ENCODE measurements at regions of chr9 and their contacts with region 1.

Region 1: DNA sequence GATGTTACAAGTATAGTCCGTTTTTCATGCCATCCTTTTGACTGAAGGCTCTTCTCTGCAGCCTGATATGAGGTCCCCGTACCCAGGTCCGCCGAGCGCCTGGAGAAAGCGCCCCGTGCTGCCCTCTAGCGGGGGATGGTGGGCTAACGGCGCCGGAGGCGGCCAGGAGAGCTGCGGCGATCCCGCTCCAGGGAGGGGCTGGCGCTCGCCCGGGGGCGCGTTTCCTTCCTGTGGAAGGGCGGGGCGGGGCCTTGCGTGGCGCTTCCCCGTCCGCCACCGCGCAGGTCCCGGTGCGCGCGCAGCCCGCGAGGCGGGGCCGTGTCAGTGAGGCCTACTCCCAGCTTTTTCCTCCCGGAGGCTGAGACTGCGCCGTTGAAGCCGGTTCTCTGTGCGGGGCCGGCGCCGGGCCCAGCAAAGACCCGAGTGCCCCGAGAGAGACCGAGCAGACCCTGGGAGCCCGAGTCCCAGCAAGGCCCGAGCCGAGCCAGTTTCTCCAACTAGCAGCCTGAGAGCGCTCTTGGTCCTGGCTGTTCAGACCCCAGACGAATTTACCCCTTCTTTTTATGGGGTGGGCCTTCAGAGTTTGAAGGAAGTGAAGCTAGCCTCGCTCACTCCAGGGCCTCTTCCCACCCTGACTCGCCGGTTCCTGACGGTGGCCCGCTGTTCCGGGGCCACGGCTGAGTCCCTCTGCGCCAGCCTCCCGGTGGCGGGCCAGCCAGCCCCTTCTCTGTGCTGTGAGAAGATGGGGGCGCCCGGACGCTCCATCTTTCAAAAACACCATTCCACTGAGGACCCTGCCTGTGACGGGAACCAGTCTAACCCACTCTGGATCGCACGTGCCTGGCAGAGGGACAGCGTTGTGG is 9.7 kb upstream of the PHF2 start:
- DNase-seq: peak; percentile 69
- ATAC-seq: peak; percentile 97
- H3K4me3 ChIP-seq: peak overlapping the region; percentile 73
- H3K27ac ChIP-seq: peak overlapping the region; percentile 88
- H3K4me1 ChIP-seq: peaks cover 7% of the 10 kb centered on the region
- H3K27me3 ChIP-seq: no peaks in the 10 kb centered on the region
- CTCF ChIP-seq: peak; percentile 93 to 96 (median 94); a peak in 5 of 6 replicates
- EP300 ChIP-seq: no peak
- POLR2A ChIP-seq: peak; percentile 92
- RAD21 ChIP-seq: peak; percentile 71

Region 2: DNA sequence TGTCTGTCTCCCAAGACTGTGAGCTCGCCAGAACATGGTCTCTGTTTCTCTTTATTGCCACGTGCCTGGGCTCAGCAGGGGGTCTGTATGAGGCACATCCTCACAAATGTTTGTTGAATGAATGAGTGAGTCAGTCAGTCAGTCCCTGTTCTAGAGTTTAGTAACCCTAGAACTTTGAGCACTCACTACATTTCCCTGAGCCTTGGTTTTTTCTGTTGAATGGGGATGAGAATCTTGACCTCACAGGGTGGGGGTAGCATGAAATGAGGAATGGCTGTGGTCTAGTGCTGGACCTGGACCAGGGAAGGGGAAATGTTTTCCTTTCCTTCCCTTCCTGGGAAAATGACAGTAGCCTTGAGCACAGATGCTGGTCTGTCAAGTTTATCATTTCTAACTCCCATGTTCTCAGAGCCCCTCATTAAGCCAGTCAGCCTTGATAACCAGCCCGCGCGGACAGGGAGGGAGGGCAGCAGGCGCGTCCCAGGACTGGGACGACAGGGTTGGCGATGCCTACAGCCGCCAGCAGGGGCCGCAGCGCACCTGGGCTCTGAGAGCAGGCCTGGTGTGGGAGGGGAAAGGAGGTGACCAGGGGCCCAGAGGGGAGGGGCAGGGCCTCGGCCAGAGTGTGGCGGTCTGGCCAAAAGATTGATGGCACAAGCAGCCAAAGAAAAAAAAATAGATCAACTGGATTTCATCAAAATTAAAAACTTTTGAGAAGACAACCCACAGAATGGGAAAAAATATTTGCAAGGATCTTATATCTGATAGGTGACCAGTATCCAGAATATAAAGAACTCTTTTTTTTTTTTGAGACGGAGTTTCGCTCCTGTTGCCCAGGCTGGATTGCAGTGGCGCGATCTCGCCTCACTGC is 406.8 kb before region 1 on chr9:
- CTCF ChIA-PET with region 1: interaction called, 4 read pairs
- POLR2A ChIA-PET with region 1: no interaction called
- RAD21 ChIA-PET with region 1: interaction called, 5 read pairs
- SMC1A ChIA-PET with region 1: no interaction called
- in situ Hi-C with region 1: no loop called
- intact Hi-C with region 1: loop called (anchors 1 kb)
- DNase-seq: no peak
- ATAC-seq: peak; percentile 98
- H3K4me3 ChIP-seq: no peak overlapping the region
- H3K27ac ChIP-seq: no peak overlapping the region
- H3K4me1 ChIP-seq: peaks cover 5% of the 10 kb centered on the region
- H3K27me3 ChIP-seq: no peaks in the 10 kb centered on the region; a peak in 1 of 4 replicates
- CTCF ChIP-seq: peak; percentile 98 to 100 (median 98); a peak in 5 of 6 replicates
- EP300 ChIP-seq: no peak
- POLR2A ChIP-seq: no peak
- RAD21 ChIP-seq: peak; percentile 98

Region 3: DNA sequence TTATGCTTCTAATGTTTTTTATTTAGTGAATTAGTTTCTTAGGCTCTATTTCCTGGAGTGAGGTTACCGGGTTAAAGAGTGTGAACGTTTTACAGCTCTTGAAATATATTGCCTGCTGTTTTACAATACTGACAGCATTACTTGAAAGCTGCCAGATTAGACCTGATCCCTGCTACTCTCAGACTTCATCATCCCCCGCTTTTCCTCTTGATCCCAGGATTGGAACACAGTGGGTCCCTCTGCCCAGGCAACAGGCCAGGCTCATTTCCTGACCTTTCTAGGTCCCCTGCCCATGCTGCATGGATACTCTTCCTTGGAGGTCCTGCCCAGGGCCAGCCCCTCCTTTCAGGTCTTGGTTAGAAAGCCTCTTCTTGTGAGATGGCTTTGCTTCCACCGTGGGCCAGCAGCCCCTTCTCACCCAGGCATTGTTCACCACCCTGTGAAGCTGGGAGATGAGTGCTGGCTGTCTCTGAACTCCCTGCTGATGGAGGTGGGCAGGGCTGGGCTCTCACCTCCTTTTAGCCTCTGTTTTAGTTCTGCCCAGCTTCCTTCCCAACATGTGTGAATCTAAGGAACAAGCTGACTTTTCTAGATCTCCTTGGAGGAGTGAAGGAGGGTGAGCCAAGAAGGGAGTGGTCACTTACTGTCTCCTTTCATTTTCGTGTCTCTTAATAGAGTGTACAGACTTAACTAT is 97.7 kb before region 1 on chr9:
- CTCF ChIA-PET with region 1: interaction called, 11 read pairs
- POLR2A ChIA-PET with region 1: no interaction called
- RAD21 ChIA-PET with region 1: interaction called, 5 read pairs
- SMC1A ChIA-PET with region 1: interaction called, 4 read pairs
- in situ Hi-C with region 1: no loop called
- intact Hi-C with region 1: no loop called
- DNase-seq: no peak
- ATAC-seq: peak; percentile 40
- H3K4me3 ChIP-seq: 0 out of 2 replicates have a peak overlapping the region, but pooled peaks have one; percentile 19
- H3K27ac ChIP-seq: peak overlapping the region; percentile 14; the same call in 1 of the 2 replicates
- H3K4me1 ChIP-seq: peaks cover 25% of the 10 kb centered on the region
- H3K27me3 ChIP-seq: no peaks in the 10 kb centered on the region
- CTCF ChIP-seq: no peak
- EP300 ChIP-seq: no peak
- POLR2A ChIP-seq: no peak
- RAD21 ChIP-seq: no peak

Region 4: GRCh38 chr9:93549611-93550010 is 17.0 kb before region 1 on chr9:
- CTCF ChIA-PET with region 1: interaction called, 26 read pairs
- POLR2A ChIA-PET with region 1: interaction called, 3 read pairs
- RAD21 ChIA-PET with region 1: interaction called, 5 read pairs
- SMC1A ChIA-PET with region 1: interaction called, 7 read pairs
- in situ Hi-C with region 1: no loop called
- intact Hi-C with region 1: no loop called
- DNase-seq: no peak
- ATAC-seq: no peak
- H3K4me3 ChIP-seq: no peak overlapping the region
- H3K27ac ChIP-seq: no peak overlapping the region
- H3K4me1 ChIP-seq: no peaks in the 10 kb centered on the region
- H3K27me3 ChIP-seq: no peaks in the 10 kb centered on the region
- CTCF ChIP-seq: no peak
- EP300 ChIP-seq: no peak
- POLR2A ChIP-seq: no peak
- RAD21 ChIP-seq: no peak

Region 5: GRCh38 chr9:93577076-93577974 is 10.7 kb after region 1 on chr9:
- CTCF ChIA-PET with region 1: interaction called, 24 read pairs
- POLR2A ChIA-PET with region 1: interaction called, 7 read pairs
- RAD21 ChIA-PET with region 1: interaction called, 3 read pairs
- SMC1A ChIA-PET with region 1: interaction called, 6 read pairs
- in situ Hi-C with region 1: no loop called
- intact Hi-C with region 1: no loop called
- DNase-seq: no peak
- ATAC-seq: peak; percentile 17
- H3K4me3 ChIP-seq: peak overlapping the region; percentile 68
- H3K27ac ChIP-seq: no peak overlapping the region
- H3K4me1 ChIP-seq: peaks cover 11% of the 10 kb centered on the region
- H3K27me3 ChIP-seq: no peaks in the 10 kb centered on the region
- CTCF ChIP-seq: no peak
- EP300 ChIP-seq: no peak
- POLR2A ChIP-seq: no peak
- RAD21 ChIP-seq: no peak

Region 6: DNA sequence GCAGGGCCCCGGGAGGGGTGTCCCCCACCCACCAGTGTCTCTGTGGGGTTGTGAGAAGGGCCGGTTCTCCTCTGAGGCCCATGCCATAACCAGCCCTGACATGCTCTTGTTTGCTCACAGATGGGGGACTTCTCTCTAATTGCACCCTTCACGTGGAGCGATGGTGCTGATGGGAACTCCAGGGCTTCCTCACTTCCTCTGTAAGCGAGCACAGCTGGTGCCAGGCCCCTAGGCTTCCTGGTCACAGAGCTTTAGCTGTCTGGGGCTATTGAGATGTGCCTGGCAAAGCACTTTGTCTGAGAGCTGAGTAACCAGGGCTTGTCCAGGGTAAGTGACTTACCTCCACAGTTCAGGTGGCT is 46.1 kb after region 1 on chr9:
- CTCF ChIA-PET with region 1: no interaction called
- POLR2A ChIA-PET with region 1: no interaction called
- RAD21 ChIA-PET with region 1: no interaction called
- SMC1A ChIA-PET with region 1: no interaction called
- in situ Hi-C with region 1: no loop called
- intact Hi-C with region 1: no loop called
- DNase-seq: peak; percentile 15
- ATAC-seq: peak; percentile 83
- H3K4me3 ChIP-seq: no peak overlapping the region
- H3K27ac ChIP-seq: peak overlapping the region; percentile 1; the same call in 1 of the 2 replicates
- H3K4me1 ChIP-seq: peaks cover 3% of the 10 kb centered on the region; the same call in 1 of the 2 replicates
- H3K27me3 ChIP-seq: no peaks in the 10 kb centered on the region
- CTCF ChIP-seq: no peak
- EP300 ChIP-seq: no peak
- POLR2A ChIP-seq: no peak
- RAD21 ChIP-seq: no peak

Region 7: GRCh38 chr9:93660352-93661051 is 93.9 kb after region 1 on chr9:
- CTCF ChIA-PET with region 1: no interaction called
- POLR2A ChIA-PET with region 1: no interaction called
- RAD21 ChIA-PET with region 1: no interaction called
- SMC1A ChIA-PET with region 1: no interaction called
- in situ Hi-C with region 1: no loop called
- intact Hi-C with region 1: no loop called
- DNase-seq: no peak
- ATAC-seq: no peak
- H3K4me3 ChIP-seq: no peak overlapping the region
- H3K27ac ChIP-seq: no peak overlapping the region
- H3K4me1 ChIP-seq: no peaks in the 10 kb centered on the region
- H3K27me3 ChIP-seq: no peaks in the 10 kb centered on the region
- CTCF ChIP-seq: 0 out of 6 replicates have a peak, but pooled peaks of 1 of the 3 experiments have one; percentile 4
- EP300 ChIP-seq: no peak
- POLR2A ChIP-seq: no peak
- RAD21 ChIP-seq: no peak